CD8-positive, alpha-beta T cell (primary cell): ENCODE measurements at regions of chr3 and their contacts with region 1.

Region 1: GRCh38 chr3:56988458-56989168 is 71.9 kb upstream of the SPATA12 start:
- DNase-seq: peak; percentile 21 to 84 (median 76)
- ATAC-seq: peak; percentile 69
- H3K4me3 ChIP-seq: no peak overlapping the region
- H3K4me3 Mint-ChIP-seq: no peak overlapping the region
- H3K27ac ChIP-seq: no peak overlapping the region
- H3K27ac Mint-ChIP-seq: no peak overlapping the region
- H3K4me1 ChIP-seq: peaks cover 11% of the 10 kb centered on the region
- H3K4me1 Mint-ChIP-seq: peaks cover 11% of the 10 kb centered on the region
- H3K27me3 ChIP-seq: peaks cover 0 to 2% of the 10 kb centered on the region in 2 experiments
- H3K27me3 Mint-ChIP-seq: peaks cover 8% of the 10 kb centered on the region
- CTCF ChIP-seq: peak; percentile 90

Region 2: DNA sequence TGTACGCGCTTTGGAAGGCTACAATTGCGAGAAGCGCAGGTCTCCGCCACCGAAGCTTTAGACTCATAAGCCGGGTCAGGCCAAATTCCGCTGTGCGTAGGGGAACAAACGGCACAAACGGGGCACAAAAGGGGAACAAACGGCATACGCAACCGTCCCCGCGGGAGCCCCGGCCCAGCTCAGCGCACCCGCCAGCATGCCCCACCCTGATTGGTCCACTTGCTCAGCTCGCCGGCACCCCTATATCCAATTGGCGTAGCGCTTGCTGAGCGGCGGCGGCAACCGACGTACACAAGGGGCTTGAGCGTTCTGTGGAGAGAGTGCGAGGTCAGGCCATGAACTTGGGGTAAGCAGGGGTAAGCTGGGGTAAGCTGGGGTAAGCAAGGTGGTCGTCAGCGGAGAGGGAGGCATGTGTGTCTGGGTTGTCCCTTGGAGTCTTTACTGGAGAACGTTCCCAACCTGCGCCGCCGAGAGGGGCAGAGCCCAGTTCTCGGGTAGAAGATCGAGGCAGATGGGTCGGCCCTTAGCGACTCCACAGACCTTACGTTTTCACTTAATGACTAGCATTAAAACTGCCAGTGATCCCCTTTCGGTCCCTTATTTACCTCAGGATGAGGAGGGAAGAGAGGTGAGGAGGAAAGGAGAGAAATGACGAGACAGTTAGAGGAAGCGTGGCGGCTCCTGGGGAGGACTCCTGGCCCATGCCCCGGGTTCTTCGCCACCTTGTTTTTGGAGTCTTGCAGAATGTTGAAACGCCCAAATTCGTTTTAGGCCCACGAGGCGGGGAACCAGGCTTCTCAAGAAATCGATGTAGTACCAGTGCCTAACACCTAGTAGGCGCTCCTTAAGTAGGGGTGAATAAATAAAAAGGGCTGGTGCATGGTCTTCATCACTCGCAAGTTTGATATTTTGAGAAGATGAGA is 431.4 kb before region 1 on chr3 and contains the start of gene CCDC66:
- CTCF ChIA-PET with region 1: interaction called, 4 read pairs
- POLR2A ChIA-PET with region 1: no interaction called
- intact Hi-C with region 1: loop called (anchors 5 to 10 kb)
- DNase-seq: peak; percentile 88 to 96 (median 94)
- ATAC-seq: peak; percentile 89
- H3K4me3 ChIP-seq: peak within 1 kb of the TSS; percentile 70 to 78
- H3K4me3 Mint-ChIP-seq: peak within 1 kb of the TSS; percentile 100
- H3K27ac ChIP-seq: peak within 1 kb of the TSS; percentile 91 to 93
- H3K27ac Mint-ChIP-seq: peak within 1 kb of the TSS; percentile 100
- H3K4me1 ChIP-seq: peaks cover 22% of the 10 kb centered on the region
- H3K4me1 Mint-ChIP-seq: peaks cover 32% of the 10 kb centered on the region
- H3K27me3 ChIP-seq: no peaks in the 10 kb centered on the region
- H3K27me3 Mint-ChIP-seq: no peaks in the 10 kb centered on the region
- CTCF ChIP-seq: peak; percentile 83
- total RNA-seq, gene CCDC66: 63.9 to 65.4 TPM

Region 3: GRCh38 chr3:56725175-56725574 is 263.4 kb before region 1 on chr3:
- CTCF ChIA-PET with region 1: interaction called, 15 read pairs
- POLR2A ChIA-PET with region 1: no interaction called
- intact Hi-C with region 1: no loop called
- DNase-seq: peak; percentile 25 to 86 (median 66)
- ATAC-seq: peak; percentile 89
- H3K4me3 ChIP-seq: no peak overlapping the region
- H3K4me3 Mint-ChIP-seq: peak overlapping the region; percentile 65
- H3K27ac ChIP-seq: peak overlapping the region in 1 of 2 experiments; percentile 43
- H3K27ac Mint-ChIP-seq: peak overlapping the region; percentile 92
- H3K4me1 ChIP-seq: peaks cover 46% of the 10 kb centered on the region
- H3K4me1 Mint-ChIP-seq: peaks cover 64% of the 10 kb centered on the region
- H3K27me3 ChIP-seq: no peaks in the 10 kb centered on the region
- H3K27me3 Mint-ChIP-seq: no peaks in the 10 kb centered on the region
- CTCF ChIP-seq: no peak

Region 4: GRCh38 chr3:56790016-56790821 is 198.4 kb before region 1 on chr3:
- CTCF ChIA-PET with region 1: interaction called, 19 read pairs
- POLR2A ChIA-PET with region 1: no interaction called
- intact Hi-C with region 1: no loop called
- DNase-seq: peak in 6 of 9 experiments; percentile 36 to 84 (median 55)
- ATAC-seq: peak; percentile 57
- H3K4me3 ChIP-seq: peak overlapping the region in 1 of 2 experiments; percentile 19
- H3K4me3 Mint-ChIP-seq: peak overlapping the region; percentile 58
- H3K27ac ChIP-seq: peak overlapping the region; percentile 46 to 80
- H3K27ac Mint-ChIP-seq: peak overlapping the region; percentile 88
- H3K4me1 ChIP-seq: peaks cover 93% of the 10 kb centered on the region
- H3K4me1 Mint-ChIP-seq: peaks cover 90% of the 10 kb centered on the region
- H3K27me3 ChIP-seq: no peaks in the 10 kb centered on the region
- H3K27me3 Mint-ChIP-seq: no peaks in the 10 kb centered on the region
- CTCF ChIP-seq: no peak

Region 5: DNA sequence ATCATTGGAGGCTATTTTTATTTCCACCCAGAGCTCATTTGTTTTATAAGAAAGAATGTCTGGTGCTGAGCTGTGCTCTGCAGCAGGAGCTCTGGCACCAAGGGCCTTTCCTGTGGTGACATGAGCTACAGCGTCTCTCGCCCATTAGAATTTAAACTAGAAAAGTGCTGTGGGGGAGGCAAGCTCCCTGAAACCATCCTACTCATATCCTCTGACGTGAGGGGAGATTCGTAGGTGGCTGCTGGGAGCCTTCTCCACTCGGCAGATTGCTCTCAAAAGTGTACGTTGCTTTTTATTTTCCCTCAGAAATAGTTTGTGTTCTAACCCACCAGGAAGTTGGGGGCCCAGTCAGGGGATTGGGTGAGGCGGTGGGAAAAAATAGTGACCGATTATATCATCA is 110.5 kb before region 1 on chr3:
- CTCF ChIA-PET with region 1: interaction called, 10 read pairs
- POLR2A ChIA-PET with region 1: no interaction called
- intact Hi-C with region 1: no loop called
- DNase-seq: peak in 5 of 9 experiments; percentile 32 to 69 (median 43)
- ATAC-seq: peak; percentile 95
- H3K4me3 ChIP-seq: no peak overlapping the region
- H3K4me3 Mint-ChIP-seq: peak overlapping the region; percentile 61
- H3K27ac ChIP-seq: peak overlapping the region; percentile 4 to 13
- H3K27ac Mint-ChIP-seq: peak overlapping the region; percentile 89
- H3K4me1 ChIP-seq: peaks cover 43% of the 10 kb centered on the region
- H3K4me1 Mint-ChIP-seq: peaks cover 65% of the 10 kb centered on the region
- H3K27me3 ChIP-seq: no peaks in the 10 kb centered on the region
- H3K27me3 Mint-ChIP-seq: no peaks in the 10 kb centered on the region
- CTCF ChIP-seq: no peak

Region 6: DNA sequence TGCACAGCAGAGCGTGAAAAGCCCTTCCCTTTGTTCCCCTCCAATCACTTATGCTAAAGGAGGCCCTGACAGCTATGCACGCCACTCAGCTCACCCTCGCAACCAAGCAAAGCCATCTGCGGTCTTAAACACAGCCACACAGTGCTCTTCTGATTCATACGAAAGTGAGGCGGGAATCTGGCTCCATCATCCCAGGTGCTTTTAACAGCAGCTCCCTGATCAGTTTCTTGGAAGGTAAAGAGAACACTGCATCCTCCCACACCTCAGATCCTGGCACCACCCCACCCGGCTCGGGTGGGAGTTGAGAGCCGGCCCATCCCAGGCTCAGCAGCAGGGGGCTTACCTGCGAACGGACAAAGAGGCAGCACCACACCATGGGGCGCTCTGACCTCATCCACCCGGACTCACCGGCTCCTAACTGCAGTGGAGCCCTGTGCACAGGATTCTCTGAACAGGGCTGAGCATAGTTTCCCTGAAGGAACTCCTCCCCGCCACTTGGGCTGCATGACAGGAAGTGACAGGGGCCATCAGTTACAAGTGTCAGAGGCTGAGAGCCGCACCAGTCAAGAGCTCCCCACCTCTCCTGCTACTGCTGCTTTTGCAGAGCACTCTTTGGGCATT is 72.5 kb before region 1 on chr3:
- CTCF ChIA-PET with region 1: interaction called, 58 read pairs
- POLR2A ChIA-PET with region 1: no interaction called
- intact Hi-C with region 1: loop called in 1 of 2 experiments (anchors 2 kb)
- DNase-seq: peak; percentile 44 to 88 (median 75)
- ATAC-seq: peak; percentile 89
- H3K4me3 ChIP-seq: peak overlapping the region; percentile 75 to 78
- H3K4me3 Mint-ChIP-seq: peak overlapping the region; percentile 92
- H3K27ac ChIP-seq: peak overlapping the region; percentile 72 to 88
- H3K27ac Mint-ChIP-seq: peak overlapping the region; percentile 91
- H3K4me1 ChIP-seq: peaks cover 57% of the 10 kb centered on the region
- H3K4me1 Mint-ChIP-seq: peaks cover 77% of the 10 kb centered on the region
- H3K27me3 ChIP-seq: no peaks in the 10 kb centered on the region
- H3K27me3 Mint-ChIP-seq: no peaks in the 10 kb centered on the region
- CTCF ChIP-seq: no peak